ENCODE measurements at regions of chr4 and their contacts with region 1.

Region 1: GRCh38 chr4:139030614-139031235 is 15.1 kb downstream of the NOCT start:
- DNase-seq: peak; percentile 50 to 88 (median 76)
- ATAC-seq: peak; percentile 81
- H3K4me3 ChIP-seq: no peak overlapping the region
- H3K4me3 Mint-ChIP-seq: no peak overlapping the region
- H3K27ac ChIP-seq: no peak overlapping the region
- H3K27ac Mint-ChIP-seq: no peak overlapping the region
- H3K4me1 ChIP-seq: peaks cover 2% of the 10 kb centered on the region
- H3K4me1 Mint-ChIP-seq: peaks cover 12% of the 10 kb centered on the region
- H3K27me3 ChIP-seq: no peaks in the 10 kb centered on the region
- H3K27me3 Mint-ChIP-seq: no peaks in the 10 kb centered on the region
- CTCF ChIP-seq: peak; percentile 81

Region 2: DNA sequence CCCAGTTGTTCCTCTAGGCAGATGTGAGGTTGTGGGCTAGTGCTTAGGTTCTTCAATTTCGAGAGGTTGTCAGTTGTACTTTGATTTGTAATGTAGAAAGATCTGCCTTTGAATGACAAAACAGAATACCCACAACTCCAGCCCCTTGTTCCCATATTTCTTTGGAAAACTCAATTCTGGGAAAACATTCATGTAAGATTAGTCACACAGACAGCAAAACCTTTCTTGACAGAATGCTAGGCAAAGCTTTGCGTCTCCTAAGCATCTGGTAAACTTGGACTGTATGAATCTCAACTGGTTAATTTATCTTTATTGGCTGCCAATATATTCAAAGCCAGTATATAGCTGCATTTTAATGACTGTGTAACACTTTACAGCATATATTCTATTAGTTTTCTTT is 19.7 kb after region 1 on chr4:
- CTCF ChIA-PET with region 1: interaction called, 13 read pairs
- POLR2A ChIA-PET with region 1: interaction called, 3 read pairs
- intact Hi-C with region 1: no loop called
- DNase-seq: no peak
- ATAC-seq: no peak
- H3K4me3 ChIP-seq: no peak overlapping the region
- H3K4me3 Mint-ChIP-seq: no peak overlapping the region
- H3K27ac ChIP-seq: no peak overlapping the region
- H3K27ac Mint-ChIP-seq: peak overlapping the region; percentile 14
- H3K4me1 ChIP-seq: no peaks in the 10 kb centered on the region
- H3K4me1 Mint-ChIP-seq: peaks cover 15% of the 10 kb centered on the region
- H3K27me3 ChIP-seq: no peaks in the 10 kb centered on the region
- H3K27me3 Mint-ChIP-seq: no peaks in the 10 kb centered on the region
- CTCF ChIP-seq: no peak

Region 3: GRCh38 chr4:139092271-139092670 is 61.5 kb after region 1 on chr4:
- CTCF ChIA-PET with region 1: interaction called, 39 read pairs
- POLR2A ChIA-PET with region 1: no interaction called
- intact Hi-C with region 1: no loop called
- DNase-seq: no peak
- ATAC-seq: no peak
- H3K4me3 ChIP-seq: no peak overlapping the region
- H3K4me3 Mint-ChIP-seq: no peak overlapping the region
- H3K27ac ChIP-seq: no peak overlapping the region
- H3K27ac Mint-ChIP-seq: no peak overlapping the region
- H3K4me1 ChIP-seq: no peaks in the 10 kb centered on the region
- H3K4me1 Mint-ChIP-seq: no peaks in the 10 kb centered on the region
- H3K27me3 ChIP-seq: no peaks in the 10 kb centered on the region
- H3K27me3 Mint-ChIP-seq: no peaks in the 10 kb centered on the region
- CTCF ChIP-seq: no peak

Region 4: GRCh38 chr4:139229534-139230039 is 198.9 kb after region 1 on chr4:
- CTCF ChIA-PET with region 1: interaction called, 7 read pairs
- POLR2A ChIA-PET with region 1: no interaction called
- intact Hi-C with region 1: loop called in 1 of 2 experiments (anchors 2 kb)
- DNase-seq: peak in 3 of 9 experiments; percentile 7 to 74 (median 64)
- ATAC-seq: peak; percentile 70
- H3K4me3 ChIP-seq: no peak overlapping the region
- H3K4me3 Mint-ChIP-seq: no peak overlapping the region
- H3K27ac ChIP-seq: no peak overlapping the region
- H3K27ac Mint-ChIP-seq: no peak overlapping the region
- H3K4me1 ChIP-seq: no peaks in the 10 kb centered on the region
- H3K4me1 Mint-ChIP-seq: no peaks in the 10 kb centered on the region
- H3K27me3 ChIP-seq: no peaks in the 10 kb centered on the region
- H3K27me3 Mint-ChIP-seq: no peaks in the 10 kb centered on the region
- CTCF ChIP-seq: peak; percentile 72

Region 5: DNA sequence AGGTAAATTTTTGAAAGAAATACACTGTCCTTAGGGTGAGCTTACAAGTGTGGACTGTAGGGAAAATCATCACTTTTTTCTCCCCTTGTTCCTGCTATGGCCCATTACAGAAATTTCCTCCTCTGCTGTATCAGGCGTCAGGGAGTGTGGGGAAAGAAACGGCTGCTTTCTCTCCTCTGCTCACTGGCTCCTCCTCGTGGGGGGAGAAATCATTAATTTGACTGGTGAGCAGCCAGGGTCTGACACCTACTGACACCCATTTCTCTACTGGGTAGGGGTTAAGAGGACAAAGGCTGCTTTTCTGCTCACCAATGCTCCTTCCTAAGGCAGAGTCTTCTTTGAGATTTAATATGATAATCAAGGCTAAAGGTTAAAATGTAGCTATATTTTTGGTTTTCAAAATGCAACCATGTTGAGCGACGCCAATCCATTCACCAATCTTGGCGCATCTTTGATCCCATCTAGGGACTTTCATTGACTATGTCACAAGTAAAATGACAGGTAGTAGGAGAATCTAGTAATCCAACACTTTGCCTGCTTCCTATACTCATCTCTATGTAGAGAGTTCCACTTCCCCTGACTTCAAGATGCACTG is 500.2 kb after region 1 on chr4:
- CTCF ChIA-PET with region 1: interaction called, 33 read pairs
- POLR2A ChIA-PET with region 1: interaction called, 5 read pairs
- intact Hi-C with region 1: loop called (anchors 1 to 2 kb)
- DNase-seq: peak; percentile 34 to 74 (median 63)
- ATAC-seq: peak; percentile 70
- H3K4me3 ChIP-seq: no peak overlapping the region
- H3K4me3 Mint-ChIP-seq: no peak overlapping the region
- H3K27ac ChIP-seq: no peak overlapping the region
- H3K27ac Mint-ChIP-seq: no peak overlapping the region
- H3K4me1 ChIP-seq: no peaks in the 10 kb centered on the region
- H3K4me1 Mint-ChIP-seq: peaks cover 14% of the 10 kb centered on the region
- H3K27me3 ChIP-seq: no peaks in the 10 kb centered on the region
- H3K27me3 Mint-ChIP-seq: no peaks in the 10 kb centered on the region
- CTCF ChIP-seq: peak; percentile 79

Region 6: DNA sequence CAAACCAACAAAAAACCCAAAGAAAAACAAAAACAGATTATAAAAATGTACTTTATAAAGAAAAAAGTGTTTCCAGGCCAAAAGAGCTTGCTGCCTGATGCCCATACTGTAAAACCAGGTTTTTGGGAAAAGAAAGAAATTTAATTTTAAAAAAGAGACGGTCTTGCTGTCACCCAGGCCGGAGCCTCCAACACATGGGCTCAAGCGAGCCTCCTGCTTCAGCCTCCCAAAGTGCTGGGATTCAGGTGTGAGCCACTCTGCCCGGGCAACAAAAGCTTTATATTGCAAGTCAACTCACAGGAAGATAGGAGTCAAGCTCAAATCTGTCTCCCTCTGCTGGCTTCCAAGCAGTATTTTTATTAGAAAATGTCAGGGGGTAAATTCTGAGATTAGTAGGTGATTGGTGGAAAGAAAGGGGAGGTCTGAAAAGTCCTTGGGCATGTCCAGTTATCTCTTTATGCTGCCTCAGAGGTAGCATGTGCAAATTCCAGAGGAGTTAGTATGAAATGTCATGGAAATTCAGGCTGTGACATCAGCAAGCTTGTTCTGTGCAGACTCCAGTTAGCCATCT is 674.3 kb after region 1 on chr4:
- CTCF ChIA-PET with region 1: no interaction called
- POLR2A ChIA-PET with region 1: no interaction called
- intact Hi-C with region 1: no loop called
- DNase-seq: no peak
- ATAC-seq: no peak
- H3K4me3 ChIP-seq: no peak overlapping the region
- H3K4me3 Mint-ChIP-seq: no peak overlapping the region
- H3K27ac ChIP-seq: no peak overlapping the region
- H3K27ac Mint-ChIP-seq: no peak overlapping the region
- H3K4me1 ChIP-seq: no peaks in the 10 kb centered on the region
- H3K4me1 Mint-ChIP-seq: no peaks in the 10 kb centered on the region
- H3K27me3 ChIP-seq: no peaks in the 10 kb centered on the region
- H3K27me3 Mint-ChIP-seq: no peaks in the 10 kb centered on the region
- CTCF ChIP-seq: no peak